ENCODE measurements at regions of chr21 and their contacts with region 1.

Region 1: GRCh38 chr21:37366482-37367316 is at the start of gene DYRK1A:
- DNase-seq: peak; percentile 99
- ATAC-seq: peak; percentile 81
- H3K4me3 ChIP-seq: peak within 1 kb of the TSS; percentile 96
- H3K27ac ChIP-seq: peak within 1 kb of the TSS; percentile 99
- H3K4me1 ChIP-seq: peaks cover 2% of the 10 kb centered on the region; the same call in 1 of the 2 replicates
- H3K27me3 ChIP-seq: no peaks in the 10 kb centered on the region
- CTCF ChIP-seq: no peak
- POLR2A ChIP-seq: peak; percentile 86
- RAD21 ChIP-seq: peak; percentile 17; the same call in 1 of the 2 replicates
- total RNA-seq, gene DYRK1A: 41.9 and 50.5 TPM in 2 replicates

Region 2: GRCh38 chr21:37267269-37268184 is 99.2 kb before region 1 on chr21 and contains the start of gene VPS26C:
- CTCF ChIA-PET with region 1: no interaction called
- POLR2A ChIA-PET with region 1: no interaction called
- dilution Hi-C with region 1: no loop called
- in situ Hi-C with region 1: no loop called
- intact Hi-C with region 1: loop called (anchors 1 kb)
- DNase-seq: peak; percentile 99
- ATAC-seq: peak; percentile 93
- H3K4me3 ChIP-seq: peak within 1 kb of the TSS; percentile 69
- H3K27ac ChIP-seq: peak within 1 kb of the TSS; percentile 93
- H3K4me1 ChIP-seq: peaks cover 3% of the 10 kb centered on the region; the same call in 1 of the 2 replicates
- H3K27me3 ChIP-seq: no peaks in the 10 kb centered on the region
- CTCF ChIP-seq: 0 out of 2 replicates have a peak, but pooled peaks have one; percentile 2
- POLR2A ChIP-seq: peak; percentile 97
- RAD21 ChIP-seq: peak; percentile 16; the same call in 1 of the 2 replicates
- total RNA-seq, gene VPS26C: 30.0 and 36.6 TPM in 2 replicates

Region 3: GRCh38 chr21:37331411-37331810 is 35.3 kb before region 1 on chr21:
- CTCF ChIA-PET with region 1: no interaction called
- POLR2A ChIA-PET with region 1: no interaction called
- dilution Hi-C with region 1: no loop called
- in situ Hi-C with region 1: no loop called
- intact Hi-C with region 1: no loop called
- DNase-seq: no peak
- ATAC-seq: no peak
- H3K4me3 ChIP-seq: no peak overlapping the region
- H3K27ac ChIP-seq: no peak overlapping the region
- H3K4me1 ChIP-seq: no peaks in the 10 kb centered on the region
- H3K27me3 ChIP-seq: no peaks in the 10 kb centered on the region
- CTCF ChIP-seq: no peak
- POLR2A ChIP-seq: no peak
- RAD21 ChIP-seq: no peak

Region 4: DNA sequence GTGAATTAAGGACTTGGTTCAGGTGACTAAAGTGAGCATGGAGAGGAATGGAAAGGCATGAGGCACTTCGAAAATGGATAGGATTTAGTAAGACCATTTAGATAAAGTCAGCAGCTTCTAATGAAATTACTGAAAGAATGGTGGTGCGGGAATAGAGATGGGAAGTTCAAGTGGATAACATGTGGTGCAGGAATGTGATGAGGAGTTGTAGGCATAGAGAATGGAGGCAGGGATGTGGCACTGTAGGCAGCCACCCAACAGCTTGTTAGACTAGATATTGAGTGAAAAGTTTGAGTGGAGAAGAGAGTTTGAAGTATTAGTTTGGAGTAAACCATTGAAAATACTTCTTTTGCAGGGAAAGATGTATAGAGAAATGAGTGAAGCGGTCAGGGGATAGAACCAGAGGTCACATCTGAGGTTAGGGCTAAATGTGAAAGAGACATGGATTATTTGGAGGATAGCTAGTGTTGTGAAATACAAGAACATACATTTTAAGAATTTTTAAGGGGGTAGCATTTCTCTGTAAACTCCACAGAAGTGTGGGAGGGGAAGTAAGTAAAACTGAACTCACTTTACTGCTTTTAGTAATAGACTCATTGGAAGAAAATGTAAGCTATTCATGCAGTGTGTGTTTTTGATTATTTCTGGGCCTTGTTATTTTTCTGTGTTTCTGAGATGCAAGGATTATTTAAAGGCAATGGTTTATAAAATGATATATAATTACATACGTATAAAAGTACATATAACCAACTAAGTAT is 46.1 kb after region 1 on chr21:
- CTCF ChIA-PET with region 1: no interaction called
- POLR2A ChIA-PET with region 1: no interaction called
- dilution Hi-C with region 1: no loop called
- in situ Hi-C with region 1: no loop called
- intact Hi-C with region 1: loop called (anchors 5 kb)
- DNase-seq: peak; percentile 75
- ATAC-seq: peak; percentile 85
- H3K4me3 ChIP-seq: no peak overlapping the region
- H3K27ac ChIP-seq: peak overlapping the region; percentile 68; the same call in 1 of the 2 replicates
- H3K4me1 ChIP-seq: peaks cover 22% of the 10 kb centered on the region
- H3K27me3 ChIP-seq: no peaks in the 10 kb centered on the region
- CTCF ChIP-seq: no peak
- POLR2A ChIP-seq: no peak
- RAD21 ChIP-seq: no peak

Region 5: DNA sequence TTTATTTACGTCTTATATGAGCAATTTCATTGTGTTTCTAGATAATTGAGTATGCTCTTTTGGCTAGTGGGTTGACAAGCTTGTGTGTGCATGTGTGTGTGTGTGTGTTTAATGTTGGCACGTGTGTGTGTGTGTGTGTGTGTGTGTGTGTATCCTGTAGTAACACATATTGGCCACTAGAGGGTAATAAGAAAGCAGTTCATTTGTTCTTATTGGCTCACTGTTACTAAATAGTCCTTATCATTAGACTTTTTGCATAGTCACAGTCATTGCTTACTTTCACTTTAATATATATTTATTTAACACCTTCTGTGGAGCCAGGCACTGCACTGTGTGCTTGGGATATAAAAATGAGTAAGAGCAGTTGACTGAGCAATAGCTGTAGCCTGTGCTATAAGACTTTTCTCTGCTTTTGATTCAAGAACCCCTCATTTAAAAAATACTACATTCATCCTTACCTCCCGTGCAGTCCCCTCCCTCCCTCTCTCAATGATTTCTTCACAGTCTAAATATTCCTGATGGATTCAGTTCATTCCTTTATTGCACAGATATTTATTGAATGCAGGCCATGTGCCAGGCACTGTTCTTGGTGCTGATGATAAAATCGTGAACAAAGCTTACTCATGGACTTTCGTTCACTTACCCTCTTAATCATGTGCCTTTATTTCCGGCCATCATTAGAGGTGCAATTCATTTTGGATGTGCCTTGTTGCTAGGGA is 96.5 kb after region 1 on chr21:
- CTCF ChIA-PET with region 1: interaction called, 3 read pairs
- POLR2A ChIA-PET with region 1: no interaction called
- dilution Hi-C with region 1: no loop called
- in situ Hi-C with region 1: no loop called
- intact Hi-C with region 1: loop called (anchors 2 kb)
- DNase-seq: peak; percentile 80
- ATAC-seq: peak; percentile 80
- H3K4me3 ChIP-seq: peak overlapping the region; percentile 24; the same call in 1 of the 2 replicates
- H3K27ac ChIP-seq: no peak overlapping the region; the same call in 1 of the 2 replicates
- H3K4me1 ChIP-seq: peaks cover 18% of the 10 kb centered on the region
- H3K27me3 ChIP-seq: no peaks in the 10 kb centered on the region
- CTCF ChIP-seq: peak; percentile 75
- POLR2A ChIP-seq: no peak
- RAD21 ChIP-seq: peak; percentile 49

Region 6: DNA sequence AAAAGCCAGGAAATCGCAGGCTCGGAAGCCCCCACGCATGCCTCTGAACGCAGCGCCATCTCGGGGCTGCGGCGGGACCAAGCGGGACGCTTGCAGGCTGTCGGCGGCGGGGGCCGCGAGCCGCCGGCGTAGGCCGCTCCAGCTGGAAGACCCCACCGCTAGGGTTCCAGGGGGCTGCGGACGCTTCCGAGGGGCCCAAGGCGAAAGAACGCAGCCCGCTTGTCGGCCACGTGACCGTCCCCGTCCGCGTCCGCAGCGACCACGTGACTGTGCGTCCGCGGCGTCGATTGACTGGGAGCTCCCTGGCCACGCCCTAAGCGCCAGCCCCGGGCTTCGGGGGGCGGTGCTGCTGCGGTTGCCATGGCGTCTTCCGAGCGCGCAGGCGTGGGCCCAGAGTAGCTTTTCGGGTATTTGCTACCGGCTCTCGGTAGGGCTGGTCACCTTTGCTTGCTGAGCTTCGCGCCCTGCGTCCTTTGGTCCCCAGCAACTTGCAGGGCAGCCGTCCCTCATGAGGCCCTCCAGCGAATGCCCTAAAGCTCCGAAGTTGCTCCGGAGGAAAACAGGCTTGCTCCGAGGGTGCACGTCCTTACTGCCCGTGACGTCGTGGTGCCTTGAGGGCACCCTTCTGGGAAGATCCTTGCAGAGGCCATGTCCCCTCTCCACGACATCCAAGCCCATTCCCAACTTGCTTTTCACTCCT is 197.1 kb after region 1 on chr21:
- CTCF ChIA-PET with region 1: no interaction called
- POLR2A ChIA-PET with region 1: interaction called, 6 read pairs
- dilution Hi-C with region 1: no loop called
- in situ Hi-C with region 1: no loop called
- intact Hi-C with region 1: loop called (anchors 5 kb)
- DNase-seq: peak; percentile 92
- ATAC-seq: peak; percentile 91
- H3K4me3 ChIP-seq: peak overlapping the region; percentile 48
- H3K27ac ChIP-seq: peak overlapping the region; percentile 72
- H3K4me1 ChIP-seq: peaks cover 9% of the 10 kb centered on the region
- H3K27me3 ChIP-seq: no peaks in the 10 kb centered on the region
- CTCF ChIP-seq: peak; percentile 39
- POLR2A ChIP-seq: peak; percentile 62
- RAD21 ChIP-seq: no peak

Region 7: DNA sequence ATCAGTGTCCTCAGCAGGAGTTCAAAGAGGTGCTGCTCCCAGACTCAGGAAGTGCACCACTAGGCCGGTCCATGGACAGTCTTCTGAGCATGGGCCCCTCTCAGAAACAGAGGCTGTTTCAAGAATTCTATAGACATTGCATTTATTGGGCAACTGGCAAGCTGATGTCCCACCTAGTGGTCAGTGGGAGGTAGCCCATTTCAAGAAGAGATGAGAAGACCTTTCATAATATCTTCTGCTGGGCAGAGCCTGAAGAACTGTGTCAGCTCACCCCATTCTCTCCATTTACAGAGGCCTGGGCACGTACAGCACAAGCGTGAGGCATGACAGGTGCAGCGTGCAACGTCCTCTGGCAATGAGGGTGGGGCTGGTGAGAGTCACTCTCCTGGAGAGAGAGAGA is 215.9 kb after region 1 on chr21:
- CTCF ChIA-PET with region 1: no interaction called
- POLR2A ChIA-PET with region 1: no interaction called
- dilution Hi-C with region 1: no loop called
- in situ Hi-C with region 1: no loop called
- intact Hi-C with region 1: loop called (anchors 5 kb)
- DNase-seq: peak; percentile 77
- ATAC-seq: peak; percentile 98
- H3K4me3 ChIP-seq: no peak overlapping the region
- H3K27ac ChIP-seq: no peak overlapping the region
- H3K4me1 ChIP-seq: no peaks in the 10 kb centered on the region
- H3K27me3 ChIP-seq: peaks cover 2% of the 10 kb centered on the region; the same call in 1 of the 2 replicates
- CTCF ChIP-seq: peak; percentile 85
- POLR2A ChIP-seq: 0 out of 2 replicates have a peak, but pooled peaks have one; percentile 31
- RAD21 ChIP-seq: peak; percentile 94

Measured in IMR-90 (cell line).